HepG2 (cell line): ENCODE measurements at regions of chr2 and their contacts with region 1.

Region 1: GRCh38 chr2:134657637-134658250 is 61.1 kb downstream of the TMEM163 start:
- DNase-seq: peak; percentile 23
- ATAC-seq: 0 out of 3 replicates have a peak, but pooled peaks have one; percentile 41
- H3K4me3 ChIP-seq: no peak overlapping the region
- H3K27ac ChIP-seq: no peak overlapping the region
- H3K4me1 ChIP-seq: no peaks in the 10 kb centered on the region
- H3K27me3 ChIP-seq: no peaks in the 10 kb centered on the region; a peak in 1 of 5 replicates
- CTCF ChIP-seq: peak; percentile 58
- EP300 ChIP-seq: no peak
- POLR2A ChIP-seq: no peak
- RAD21 ChIP-seq: no peak

Region 2: GRCh38 chr2:134640494-134640893 is 17.2 kb before region 1 on chr2:
- CTCF ChIA-PET with region 1: no interaction called
- POLR2A ChIA-PET with region 1: no interaction called
- in situ Hi-C with region 1: no loop called
- intact Hi-C with region 1: no loop called
- DNase-seq: no peak
- ATAC-seq: no peak
- H3K4me3 ChIP-seq: no peak overlapping the region
- H3K27ac ChIP-seq: no peak overlapping the region
- H3K4me1 ChIP-seq: no peaks in the 10 kb centered on the region
- H3K27me3 ChIP-seq: peaks cover 2 to 15% of the 10 kb centered on the region in 2 experiments; a peak in 2 of 5 replicates
- CTCF ChIP-seq: no peak
- EP300 ChIP-seq: no peak
- POLR2A ChIP-seq: no peak
- RAD21 ChIP-seq: no peak

Region 3: DNA sequence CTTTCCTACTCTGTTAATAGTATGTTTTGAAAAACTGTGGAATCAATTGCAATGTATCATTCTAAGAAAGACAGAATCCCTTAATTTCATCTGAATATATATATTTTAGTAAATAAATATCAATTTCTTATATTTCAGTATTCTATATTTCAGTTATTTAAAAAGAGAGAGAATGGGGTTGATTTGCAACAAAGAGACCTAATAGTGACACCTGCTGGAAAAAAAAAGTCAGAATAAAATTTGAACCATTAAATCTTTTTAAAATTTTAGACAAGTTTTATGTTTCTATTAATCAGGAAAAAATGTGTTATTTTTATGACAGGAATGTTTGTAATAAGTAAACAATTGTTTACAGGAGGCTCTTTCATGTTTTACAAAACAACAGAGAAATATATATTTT is 240.2 kb after region 1 on chr2:
- CTCF ChIA-PET with region 1: no interaction called
- POLR2A ChIA-PET with region 1: no interaction called
- in situ Hi-C with region 1: no loop called
- intact Hi-C with region 1: loop called (anchors 5 kb)
- DNase-seq: no peak
- ATAC-seq: no peak
- H3K4me3 ChIP-seq: no peak overlapping the region
- H3K27ac ChIP-seq: no peak overlapping the region
- H3K4me1 ChIP-seq: peaks cover 9% of the 10 kb centered on the region
- H3K27me3 ChIP-seq: no peaks in the 10 kb centered on the region
- CTCF ChIP-seq: no peak
- EP300 ChIP-seq: no peak
- POLR2A ChIP-seq: no peak
- RAD21 ChIP-seq: no peak